ENCODE measurements at regions of chr18 and their contacts with region 1.

Region 1: DNA sequence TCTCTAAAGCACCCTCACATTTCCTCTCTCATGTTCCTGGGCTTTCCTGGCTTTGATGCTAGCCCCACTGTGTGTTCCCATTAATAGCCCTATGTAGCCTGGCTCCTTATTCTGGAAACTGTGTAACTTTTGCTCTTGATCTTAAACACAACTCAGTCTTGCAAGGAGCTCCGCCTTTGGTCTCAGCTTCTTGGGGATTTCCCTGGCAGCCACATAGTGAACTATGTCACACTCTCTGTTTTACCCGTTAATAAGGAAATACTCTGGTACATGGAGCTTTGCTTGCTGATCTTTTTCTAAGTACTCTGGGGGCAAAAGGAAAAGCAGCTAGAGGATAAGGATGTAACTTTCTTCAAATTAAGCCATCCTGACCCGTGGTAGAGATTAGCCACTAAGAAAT is 259.3 kb downstream of the NEDD4L start:
- DNase-seq: peak; percentile 75
- H3K4me3 Mint-ChIP-seq: no peak overlapping the region
- H3K27ac Mint-ChIP-seq: peak overlapping the region; percentile 40
- H3K4me1 Mint-ChIP-seq: peaks cover 38% of the 10 kb centered on the region
- H3K27me3 Mint-ChIP-seq: peaks cover 2% of the 10 kb centered on the region

Region 2: DNA sequence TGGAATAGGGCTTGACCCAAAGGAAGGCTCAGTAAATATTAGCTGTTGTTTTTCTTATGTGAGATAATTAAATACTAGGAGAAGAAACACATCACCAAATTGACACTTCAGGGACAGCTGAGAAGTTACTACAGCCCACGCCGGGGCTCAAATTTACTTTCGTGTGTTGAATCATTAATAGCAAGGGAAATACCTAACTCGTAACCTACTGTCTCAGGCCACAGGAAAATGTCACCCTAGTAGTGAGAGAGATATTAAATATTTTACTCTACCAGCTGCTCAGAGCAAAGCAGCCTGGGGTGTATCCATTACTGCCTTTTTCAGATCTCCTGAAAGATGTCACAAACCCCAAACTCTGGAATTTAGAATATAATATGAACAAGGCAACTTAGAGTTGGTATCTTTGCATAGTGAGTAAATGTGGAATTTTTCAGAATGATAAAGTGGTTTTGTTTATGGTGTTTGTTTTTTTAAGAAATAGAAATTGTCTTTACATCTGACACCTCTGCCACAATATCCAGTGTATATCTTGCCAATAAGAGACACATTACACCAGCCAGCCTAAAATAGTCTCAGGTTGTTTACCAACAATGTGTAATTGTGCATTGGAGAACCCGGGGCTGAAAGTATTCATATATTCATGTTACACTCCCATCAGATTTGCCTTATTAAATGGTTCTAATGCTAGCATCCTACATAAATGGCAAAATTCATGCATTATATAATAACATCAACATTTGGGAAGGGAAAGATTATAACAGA is 548.6 kb before region 1 on chr18:
- CTCF ChIA-PET with region 1: no interaction called
- intact Hi-C with region 1: no loop called
- DNase-seq: no peak
- H3K4me3 Mint-ChIP-seq: no peak overlapping the region
- H3K27ac Mint-ChIP-seq: no peak overlapping the region
- H3K4me1 Mint-ChIP-seq: peaks cover 3% of the 10 kb centered on the region
- H3K27me3 Mint-ChIP-seq: no peaks in the 10 kb centered on the region

Region 3: GRCh38 chr18:58263055-58263957 is 40.1 kb before region 1 on chr18:
- CTCF ChIA-PET with region 1: no interaction called
- intact Hi-C with region 1: loop called (anchors 1 kb)
- DNase-seq: no peak
- H3K4me3 Mint-ChIP-seq: no peak overlapping the region
- H3K27ac Mint-ChIP-seq: peak overlapping the region; percentile 65
- H3K4me1 Mint-ChIP-seq: peaks cover 12% of the 10 kb centered on the region
- H3K27me3 Mint-ChIP-seq: no peaks in the 10 kb centered on the region

Region 4: GRCh38 chr18:58316396-58317342 is 13.3 kb after region 1 on chr18:
- CTCF ChIA-PET with region 1: interaction called, 9 read pairs
- intact Hi-C with region 1: loop called (anchors 1 kb)
- DNase-seq: peak; percentile 72
- H3K4me3 Mint-ChIP-seq: no peak overlapping the region
- H3K27ac Mint-ChIP-seq: no peak overlapping the region
- H3K4me1 Mint-ChIP-seq: peaks cover 40% of the 10 kb centered on the region
- H3K27me3 Mint-ChIP-seq: no peaks in the 10 kb centered on the region

Region 5: GRCh38 chr18:58321986-58322385 is 18.6 kb after region 1 on chr18:
- CTCF ChIA-PET with region 1: interaction called, 9 read pairs
- intact Hi-C with region 1: loop called (anchors 1 kb)
- DNase-seq: peak; percentile 80
- H3K4me3 Mint-ChIP-seq: no peak overlapping the region
- H3K27ac Mint-ChIP-seq: no peak overlapping the region
- H3K4me1 Mint-ChIP-seq: peaks cover 16% of the 10 kb centered on the region
- H3K27me3 Mint-ChIP-seq: no peaks in the 10 kb centered on the region